Heart left ventricle (tissue), 16 donors: ENCODE measurements at regions of chr9 and their contacts with region 1.

Region 1: DNA sequence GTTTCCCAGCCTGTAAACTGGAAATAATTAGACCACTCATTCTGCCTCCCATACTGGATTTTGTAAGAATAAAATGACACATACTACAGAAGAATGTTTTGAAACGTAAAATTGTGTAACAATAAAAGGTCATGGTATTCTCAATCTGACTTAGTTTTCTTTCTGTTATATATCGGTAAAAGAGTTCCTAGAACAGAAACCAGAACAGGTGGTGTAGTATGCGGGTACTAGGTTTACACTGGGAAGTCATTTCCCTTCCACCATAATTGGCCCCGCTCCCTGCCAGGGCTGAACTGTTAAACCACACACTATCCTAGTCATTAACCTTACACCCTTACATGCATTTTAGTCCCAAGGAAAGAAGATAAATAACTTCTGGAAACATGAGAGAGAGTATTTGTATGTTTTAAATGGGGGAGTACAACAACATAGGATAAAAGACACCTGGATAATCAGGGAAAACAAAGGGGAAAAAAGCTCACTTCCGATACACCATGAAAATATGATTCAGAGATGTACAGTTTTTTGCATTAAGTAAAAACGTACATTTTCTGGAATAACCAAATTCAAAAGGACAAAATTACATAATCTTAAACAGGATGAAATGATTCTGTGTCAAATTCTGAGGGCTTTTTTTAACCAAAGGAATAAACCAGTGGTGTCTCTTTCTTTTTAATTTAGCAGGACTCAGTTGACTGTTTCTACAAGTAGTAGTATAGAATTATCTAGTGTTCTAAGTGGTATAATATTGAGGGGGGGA is 199.7 kb downstream of the GLIS3 start:
- DNase-seq: no peak
- ATAC-seq: peak in 1 of 4 donors; percentile 45
- H3K4me3 ChIP-seq: no peak overlapping the region
- H3K27ac ChIP-seq: no peak overlapping the region
- H3K4me1 ChIP-seq: peaks cover 0 to 11% (median 0%) of the 10 kb centered on the region in 12 donors
- H3K27me3 ChIP-seq: no peaks in the 10 kb centered on the region
- CTCF ChIP-seq: no peak
- POLR2A ChIP-seq: no peak

Region 2: DNA sequence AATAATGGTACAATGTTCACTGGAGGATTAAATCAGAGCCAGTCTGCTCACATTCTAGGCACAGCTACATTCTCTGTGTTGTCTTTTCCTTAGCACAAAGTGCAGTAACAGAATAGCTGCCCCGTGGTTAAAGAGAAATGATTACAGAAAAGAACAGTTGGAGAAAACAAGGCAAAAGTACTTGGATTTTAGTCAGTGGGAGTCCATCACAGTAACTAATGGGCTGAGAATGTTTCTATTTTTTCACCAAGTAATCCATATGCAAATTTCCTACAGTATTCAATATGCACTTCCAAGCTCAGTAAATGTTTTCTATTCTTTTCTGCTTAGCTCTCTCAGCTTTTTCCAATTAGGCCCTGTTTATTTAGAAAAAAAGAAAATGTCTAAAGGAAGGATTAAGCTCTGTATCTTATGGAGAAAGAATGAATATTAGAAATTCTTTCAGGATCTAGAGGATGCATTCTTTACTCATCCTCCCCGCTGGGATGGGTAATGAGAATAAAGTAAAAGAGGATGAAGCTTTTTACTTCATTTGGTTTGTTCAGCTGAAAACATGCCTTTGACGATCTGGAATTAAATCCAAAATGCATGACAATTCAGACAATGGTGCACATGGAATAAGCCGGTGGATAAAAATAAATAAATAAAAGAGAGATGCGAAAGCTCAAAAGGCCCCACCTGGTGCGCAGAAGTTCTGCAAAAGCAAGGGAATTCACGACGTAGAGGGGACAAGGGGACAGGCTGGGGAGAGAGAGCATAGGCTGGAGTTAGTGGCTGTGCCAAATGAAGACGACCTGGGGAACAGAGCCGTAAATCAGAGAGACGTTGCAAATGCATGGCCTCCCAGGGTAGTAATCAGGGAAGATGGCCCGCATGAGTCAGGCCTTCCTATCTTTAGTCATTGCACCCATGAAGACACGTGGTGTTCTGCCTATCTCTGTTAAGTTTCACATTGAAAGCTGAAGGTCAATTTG is 145.5 kb before region 1 on chr9:
- intact Hi-C with region 1: loop called in 1 of 10 experiments (anchors 10 kb)
- DNase-seq: no peak
- ATAC-seq: peak in 1 of 4 donors; percentile 42
- H3K4me3 ChIP-seq: no peak overlapping the region
- H3K27ac ChIP-seq: peak overlapping the region in 5 of 12 donors; percentile 3 to 55 (median 28)
- H3K4me1 ChIP-seq: peaks cover 0 to 18% (median 3%) of the 10 kb centered on the region in 12 donors
- H3K27me3 ChIP-seq: no peaks in the 10 kb centered on the region
- CTCF ChIP-seq: no peak
- POLR2A ChIP-seq: no peak